T-cell (primary cell): ENCODE measurements at regions of chr6 and their contacts with region 1.

Region 1: DNA sequence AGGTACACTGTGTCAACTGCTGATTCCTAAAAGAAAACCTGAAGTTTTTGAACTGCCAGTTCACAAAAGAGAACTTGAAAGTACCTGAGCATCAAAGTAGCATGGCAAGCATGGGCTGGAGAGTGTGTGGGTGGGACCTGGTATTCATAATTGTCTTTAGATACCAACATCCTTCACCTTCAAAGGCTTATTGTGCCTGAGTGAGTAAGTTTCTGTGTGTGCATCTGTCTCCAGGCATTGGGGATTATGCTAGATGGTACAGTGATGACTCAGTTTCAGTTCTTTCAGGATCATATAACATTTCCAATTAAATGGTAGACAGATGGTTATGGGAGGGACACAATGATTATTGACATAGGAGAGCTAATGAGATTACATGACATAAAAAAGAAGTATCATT is 238.5 kb downstream of the ZFAND3 start:
- DNase-seq: peak in 11 of 35 experiments; percentile 1 to 31 (median 10)
- ATAC-seq: peak; percentile 45 to 83 (median 55)
- H3K4me3 ChIP-seq: no peak overlapping the region
- H3K4me3 Mint-ChIP-seq: no peak overlapping the region
- H3K27ac ChIP-seq: no peak overlapping the region
- H3K27ac Mint-ChIP-seq: peak overlapping the region in 1 of 2 donors; percentile 6
- H3K4me1 ChIP-seq: peaks cover 0 to 7% of the 10 kb centered on the region in 2 experiments
- H3K4me1 Mint-ChIP-seq: peaks cover 38 to 44% (median 40%) of the 10 kb centered on the region in 3 donors
- H3K27me3 ChIP-seq: no peaks in the 10 kb centered on the region
- H3K27me3 Mint-ChIP-seq: no peaks in the 10 kb centered on the region

Region 2: GRCh38 chr6:38508286-38508685 is 450.3 kb after region 1 on chr6:
- CTCF ChIA-PET with region 1: no interaction called
- POLR2A ChIA-PET with region 1: interaction called in 1 of 2 experiments, 13 read pairs
- DNase-seq: no peak
- ATAC-seq: no peak
- H3K4me3 ChIP-seq: no peak overlapping the region
- H3K4me3 Mint-ChIP-seq: no peak overlapping the region
- H3K27ac ChIP-seq: no peak overlapping the region
- H3K27ac Mint-ChIP-seq: no peak overlapping the region
- H3K4me1 ChIP-seq: no peaks in the 10 kb centered on the region
- H3K4me1 Mint-ChIP-seq: no peaks in the 10 kb centered on the region
- H3K27me3 ChIP-seq: no peaks in the 10 kb centered on the region
- H3K27me3 Mint-ChIP-seq: no peaks in the 10 kb centered on the region